ENCODE measurements at regions of chr5 and their contacts with region 1.

Region 1: GRCh38 chr5:139844472-139845145 is 49.0 kb downstream of the PSD2 start:
- DNase-seq: peak; percentile 70
- H3K4me3 ChIP-seq: no peak overlapping the region
- H3K27ac ChIP-seq: no peak overlapping the region
- H3K4me1 ChIP-seq: peaks cover 40% of the 10 kb centered on the region
- H3K27me3 ChIP-seq: peaks cover 25% of the 10 kb centered on the region
- CTCF ChIP-seq: peak; percentile 80

Region 2: DNA sequence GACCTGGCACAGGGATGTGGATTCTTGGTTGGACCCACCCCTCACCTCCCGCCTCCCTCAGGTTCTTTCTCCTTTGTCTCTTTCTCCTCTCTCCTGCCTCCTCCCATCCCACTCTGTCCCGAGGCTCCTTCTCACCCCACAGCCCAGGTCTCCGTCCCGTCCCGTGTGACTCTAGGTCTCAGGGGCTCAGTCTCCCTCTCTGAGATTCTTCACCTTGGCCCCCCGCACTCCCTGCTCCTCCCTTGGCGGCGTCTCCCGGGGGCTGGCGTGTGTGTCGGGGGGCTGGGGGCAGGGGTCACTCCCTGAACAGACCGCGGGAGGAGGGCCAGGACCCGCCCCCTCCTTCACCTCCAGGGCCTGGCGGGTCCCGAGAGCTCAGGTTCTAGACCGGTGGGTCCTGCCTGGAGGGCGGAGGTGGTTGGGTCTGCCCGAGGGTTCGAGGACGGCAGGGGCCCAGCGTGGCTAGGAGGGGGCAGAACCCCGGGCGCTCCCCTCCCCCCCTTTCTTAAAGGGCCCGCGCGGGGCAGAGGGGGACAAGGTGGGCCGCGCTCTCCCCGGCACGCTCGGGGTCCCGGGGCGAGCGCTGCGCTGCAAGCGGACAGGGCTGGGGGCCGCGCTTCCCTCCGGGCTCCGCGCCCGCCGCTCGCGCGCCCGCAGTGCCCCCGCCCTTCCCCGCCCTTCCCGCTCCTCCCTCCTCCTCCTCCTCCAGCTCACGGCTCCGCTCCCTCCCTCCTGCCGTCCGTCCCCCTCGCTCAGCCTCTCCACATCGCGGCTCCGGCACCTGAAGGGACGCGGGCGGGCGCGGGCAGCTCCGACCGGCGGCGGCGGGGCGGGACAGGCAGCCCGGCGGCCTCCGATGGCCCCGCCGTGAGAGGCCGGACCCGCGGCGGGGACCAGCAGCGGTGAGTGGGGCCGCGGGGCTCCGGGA is 49.3 kb before region 1 on chr5 and contains the start of gene PSD2:
- intact Hi-C with region 1: loop called (anchors 10 kb)
- DNase-seq: peak; percentile 22
- H3K4me3 ChIP-seq: peak within 1 kb of the TSS; percentile 63
- H3K27ac ChIP-seq: no peak within 1 kb of the TSS
- H3K4me1 ChIP-seq: peaks cover 14% of the 10 kb centered on the region
- H3K27me3 ChIP-seq: peaks cover 67% of the 10 kb centered on the region
- CTCF ChIP-seq: no peak
- total RNA-seq, gene PSD2: not detected

Region 3: GRCh38 chr5:139895647-139896046 is 51.0 kb after region 1 on chr5:
- intact Hi-C with region 1: no loop called
- DNase-seq: peak; percentile 38
- H3K4me3 ChIP-seq: no peak overlapping the region
- H3K27ac ChIP-seq: no peak overlapping the region
- H3K4me1 ChIP-seq: peaks cover 34% of the 10 kb centered on the region
- H3K27me3 ChIP-seq: no peaks in the 10 kb centered on the region
- CTCF ChIP-seq: no peak

Region 4: DNA sequence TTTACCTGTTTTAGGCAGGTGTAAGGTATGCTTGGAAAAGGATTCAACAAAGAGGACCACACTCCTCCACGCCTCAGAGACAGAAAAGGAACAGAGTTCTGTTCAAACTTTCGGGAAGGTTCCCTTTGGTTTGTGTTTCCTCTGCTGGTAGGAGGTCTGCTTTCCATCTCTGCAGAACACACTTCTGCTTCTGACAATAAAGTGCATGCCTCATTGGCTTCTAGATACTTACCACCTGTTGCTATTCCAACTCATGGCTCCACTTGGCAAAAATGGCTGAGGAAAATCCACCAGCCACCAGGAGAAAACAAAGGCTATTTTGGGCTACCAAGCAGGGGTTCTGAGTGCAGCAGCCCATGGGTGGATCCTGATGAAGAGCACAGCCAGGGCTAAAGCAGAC is 85.8 kb after region 1 on chr5:
- intact Hi-C with region 1: no loop called
- DNase-seq: no peak
- H3K4me3 ChIP-seq: no peak overlapping the region
- H3K27ac ChIP-seq: no peak overlapping the region
- H3K4me1 ChIP-seq: no peaks in the 10 kb centered on the region
- H3K27me3 ChIP-seq: no peaks in the 10 kb centered on the region
- CTCF ChIP-seq: no peak

Region 5: GRCh38 chr5:140169410-140169809 is 324.8 kb after region 1 on chr5:
- intact Hi-C with region 1: no loop called
- DNase-seq: no peak
- H3K4me3 ChIP-seq: no peak overlapping the region
- H3K27ac ChIP-seq: no peak overlapping the region
- H3K4me1 ChIP-seq: peaks cover 17% of the 10 kb centered on the region
- H3K27me3 ChIP-seq: no peaks in the 10 kb centered on the region
- CTCF ChIP-seq: peak; percentile 48